Heart left ventricle (tissue), 16 donors: ENCODE measurements at regions of chr10 and their contacts with region 1.

Region 1: GRCh38 chr10:15370856-15371701 is at the start of gene FAM171A1:
- DNase-seq: peak; percentile 45 to 81 (median 61)
- ATAC-seq: peak; percentile 19 to 83 (median 68)
- H3K4me3 ChIP-seq: peak within 1 kb of the TSS; percentile 56 to 91 (median 69)
- H3K27ac ChIP-seq: peak within 1 kb of the TSS in 11 of 12 donors; percentile 51 to 83 (median 64)
- H3K4me1 ChIP-seq: peaks cover 0 to 22% (median 2%) of the 10 kb centered on the region in 12 donors
- H3K27me3 ChIP-seq: peaks cover 0 to 39% (median 0%) of the 10 kb centered on the region in 9 donors
- CTCF ChIP-seq: peak in 4 of 12 donors; percentile 20 to 31 (median 28)
- POLR2A ChIP-seq: no peak
- total RNA-seq, gene FAM171A1: 6.7 to 18.0 (median 9.9) TPM

Region 2: GRCh38 chr10:15168781-15169554 is 202.1 kb before region 1 on chr10:
- intact Hi-C with region 1: loop called in 1 of 10 experiments (anchors 2 kb)
- DNase-seq: peak; percentile 96 to 98 (median 98)
- ATAC-seq: peak; percentile 88 to 96 (median 92)
- H3K4me3 ChIP-seq: peak overlapping the region in 9 of 12 donors; percentile 11 to 64 (median 32)
- H3K27ac ChIP-seq: peak overlapping the region in 11 of 12 donors; percentile 4 to 82 (median 66)
- H3K4me1 ChIP-seq: peaks cover 3 to 38% (median 25%) of the 10 kb centered on the region in 12 donors
- H3K27me3 ChIP-seq: no peaks in the 10 kb centered on the region
- CTCF ChIP-seq: no peak
- POLR2A ChIP-seq: peak in 1 of 2 donors; percentile 73

Region 3: GRCh38 chr10:15209827-15210509 is 161.1 kb before region 1 on chr10:
- intact Hi-C with region 1: loop called (anchors 2 to 5 kb)
- DNase-seq: peak; percentile 77 to 87 (median 81)
- ATAC-seq: peak; percentile 63 to 91 (median 87)
- H3K4me3 ChIP-seq: no peak overlapping the region
- H3K27ac ChIP-seq: no peak overlapping the region
- H3K4me1 ChIP-seq: peaks cover 0 to 17% (median 4%) of the 10 kb centered on the region in 12 donors
- H3K27me3 ChIP-seq: no peaks in the 10 kb centered on the region
- CTCF ChIP-seq: peak; percentile 72 to 92 (median 83)
- POLR2A ChIP-seq: no peak

Region 4: DNA sequence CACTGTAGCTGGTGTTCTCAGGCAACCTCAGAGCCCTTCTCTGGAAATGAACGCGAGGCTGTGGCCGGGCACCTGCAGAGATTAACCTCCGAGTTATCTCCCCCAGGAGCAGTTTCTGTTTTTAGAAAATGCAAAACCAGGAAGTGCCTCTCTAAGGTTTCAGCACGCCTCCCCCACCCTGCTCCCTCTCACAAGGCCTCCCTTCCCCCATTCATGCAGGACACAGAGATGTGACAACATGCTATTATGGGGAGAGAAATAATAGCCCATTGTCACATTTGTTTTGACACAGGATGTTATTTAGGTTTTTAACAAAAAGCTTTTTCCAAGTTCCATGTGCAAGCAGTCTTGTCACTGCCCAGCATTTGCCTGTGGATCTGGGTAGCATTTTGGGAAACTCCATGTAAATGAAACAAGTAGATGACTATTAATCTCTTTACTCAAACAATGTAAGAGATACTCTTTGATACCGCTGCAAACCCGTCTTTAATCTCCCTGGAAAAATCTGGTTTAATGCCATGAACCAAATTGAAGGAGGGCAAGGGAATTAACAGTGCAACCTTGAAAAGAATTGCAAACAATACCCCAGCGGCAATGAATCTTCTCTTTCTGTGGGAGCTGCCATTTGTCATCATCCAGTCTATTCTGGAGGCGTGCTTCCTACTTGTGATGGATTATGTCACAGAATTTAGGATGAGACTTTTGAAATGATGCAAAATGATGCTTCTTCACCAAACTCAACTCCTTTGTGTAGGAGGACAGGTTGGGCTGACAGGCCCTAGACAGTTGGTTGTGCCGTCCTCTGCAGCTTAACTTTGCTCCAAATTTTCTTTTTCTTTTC is 116.1 kb before region 1 on chr10:
- intact Hi-C with region 1: loop called in 7 of 10 experiments (anchors 2 to 10 kb)
- DNase-seq: peak in 2 of 5 donors; percentile 18 to 38
- ATAC-seq: peak in 3 of 4 donors; percentile 38 to 66 (median 44)
- H3K4me3 ChIP-seq: peak overlapping the region in 11 of 12 donors; percentile 16 to 53 (median 41)
- H3K27ac ChIP-seq: peak overlapping the region in 7 of 12 donors; percentile 31 to 68 (median 53)
- H3K4me1 ChIP-seq: peaks cover 0 to 13% (median 3%) of the 10 kb centered on the region in 12 donors
- H3K27me3 ChIP-seq: peaks cover 0 to 3% (median 0%) of the 10 kb centered on the region in 9 donors
- CTCF ChIP-seq: no peak
- POLR2A ChIP-seq: no peak

Region 5: GRCh38 chr10:15262036-15262713 is 108.9 kb before region 1 on chr10:
- intact Hi-C with region 1: loop called in 9 of 10 experiments (anchors 2 to 10 kb)
- DNase-seq: no peak
- ATAC-seq: peak; percentile 52 to 72 (median 58)
- H3K4me3 ChIP-seq: no peak overlapping the region
- H3K27ac ChIP-seq: no peak overlapping the region
- H3K4me1 ChIP-seq: peaks cover 0 to 10% (median 0%) of the 10 kb centered on the region in 12 donors
- H3K27me3 ChIP-seq: no peaks in the 10 kb centered on the region
- CTCF ChIP-seq: peak in 11 of 12 donors; percentile 7 to 55 (median 31)
- POLR2A ChIP-seq: no peak

Region 6: DNA sequence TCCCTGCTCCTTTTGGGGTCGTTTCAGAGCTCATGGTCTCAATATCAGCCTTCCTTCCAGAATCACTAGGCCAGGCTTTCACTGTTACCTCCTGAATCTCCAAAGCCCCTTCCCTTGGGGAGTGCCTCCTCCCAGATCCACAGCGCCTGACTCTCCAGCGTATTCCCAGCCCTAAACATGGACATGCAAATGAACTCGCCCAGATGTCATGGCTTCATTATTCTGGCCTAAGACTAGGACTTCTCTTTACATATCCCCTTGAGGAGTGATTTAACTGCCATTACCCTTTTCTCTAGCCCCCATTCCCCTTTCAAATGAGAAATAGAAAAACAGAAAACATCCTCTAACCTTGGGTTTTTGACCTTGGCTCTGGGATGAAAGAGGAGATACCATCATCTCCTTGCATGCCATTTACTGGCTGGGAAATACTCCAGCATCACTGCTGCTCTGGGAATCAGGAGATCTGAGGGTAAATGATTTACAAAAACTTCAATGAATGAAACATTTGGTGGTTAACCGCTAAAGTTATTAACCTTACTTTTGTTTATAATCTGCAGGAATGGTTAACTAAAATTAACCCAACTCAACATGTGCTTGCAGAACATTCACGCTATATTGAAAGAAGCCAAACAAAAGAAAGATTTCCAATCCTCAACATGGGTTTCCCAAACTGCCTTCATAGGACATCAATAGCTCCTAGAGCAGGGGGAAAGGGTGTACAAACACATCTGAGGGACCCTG is 37.0 kb before region 1 on chr10:
- intact Hi-C with region 1: no loop called
- DNase-seq: no peak
- ATAC-seq: no peak
- H3K4me3 ChIP-seq: no peak overlapping the region
- H3K27ac ChIP-seq: no peak overlapping the region
- H3K4me1 ChIP-seq: peaks cover 0 to 13% (median 0%) of the 10 kb centered on the region in 12 donors
- H3K27me3 ChIP-seq: no peaks in the 10 kb centered on the region
- CTCF ChIP-seq: no peak
- POLR2A ChIP-seq: no peak